ENCODE measurements at regions of chr6 and their contacts with region 1.

Region 1: GRCh38 chr6:113994918-113995342 is 24.0 kb upstream of the HDAC2 start:
- DNase-seq: peak; percentile 87
- ATAC-seq: peak; percentile 99
- H3K4me3 ChIP-seq: no peak overlapping the region
- H3K27ac ChIP-seq: no peak overlapping the region
- H3K4me1 ChIP-seq: peaks cover 13% of the 10 kb centered on the region
- H3K27me3 ChIP-seq: no peaks in the 10 kb centered on the region
- CTCF ChIP-seq: peak; percentile 92
- EP300 ChIP-seq: 0 out of 4 replicates have a peak, but pooled peaks of 1 of the 2 experiments have one; percentile 16
- POLR2A ChIP-seq: no peak
- RAD21 ChIP-seq: peak; percentile 91

Region 2: DNA sequence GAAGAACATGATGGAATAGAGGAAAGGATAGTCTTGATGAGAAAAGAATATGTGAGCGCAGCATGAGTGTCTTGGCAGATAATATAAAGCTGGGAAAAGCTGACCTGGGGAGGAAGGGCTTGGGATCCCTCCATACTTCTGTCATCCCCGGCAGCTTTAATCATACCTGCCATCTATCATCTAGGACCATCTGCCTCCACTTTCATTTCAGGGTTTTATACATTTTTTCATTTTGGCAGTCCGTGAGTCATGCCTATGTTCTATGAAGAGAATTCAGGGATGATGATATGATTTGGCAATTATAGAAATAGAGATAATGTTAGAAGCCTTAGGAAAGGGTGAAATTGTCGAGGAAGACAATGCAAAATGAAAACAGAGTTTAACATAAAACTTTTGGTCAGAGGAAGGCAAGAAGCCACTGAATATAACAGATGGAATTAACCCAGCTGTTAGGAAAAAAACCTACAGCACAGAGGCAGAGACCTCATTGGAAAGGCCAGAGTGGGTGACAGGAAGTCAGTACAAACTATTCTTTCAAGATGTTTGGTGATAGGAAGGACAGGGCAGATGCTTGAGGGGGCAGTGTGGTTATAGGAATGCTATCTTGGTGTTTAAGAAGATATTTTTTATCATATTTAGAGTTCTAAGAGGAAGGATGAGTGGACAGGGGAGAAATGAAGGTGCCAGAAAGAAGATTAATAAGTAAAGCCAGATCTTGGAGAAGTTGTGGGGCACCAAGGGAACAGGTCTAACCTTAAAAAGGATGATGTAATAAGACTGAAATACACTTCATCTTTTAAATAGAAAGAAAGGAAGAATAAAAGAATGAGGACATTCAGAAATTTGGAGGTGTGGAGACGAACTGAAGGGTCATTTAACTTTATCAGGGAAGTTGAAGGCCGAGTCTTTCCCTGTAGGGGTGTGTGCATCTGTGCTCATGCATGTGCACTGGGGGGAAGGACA is 99.9 kb before region 1 on chr6:
- CTCF ChIA-PET with region 1: no interaction called
- POLR2A ChIA-PET with region 1: no interaction called
- in situ Hi-C with region 1: no loop called
- intact Hi-C with region 1: no loop called
- DNase-seq: no peak
- ATAC-seq: no peak
- H3K4me3 ChIP-seq: no peak overlapping the region
- H3K27ac ChIP-seq: no peak overlapping the region
- H3K4me1 ChIP-seq: no peaks in the 10 kb centered on the region
- H3K27me3 ChIP-seq: no peaks in the 10 kb centered on the region
- CTCF ChIP-seq: no peak
- EP300 ChIP-seq: no peak
- POLR2A ChIP-seq: no peak
- RAD21 ChIP-seq: no peak

Region 3: GRCh38 chr6:114304304-114304887 is 309.5 kb after region 1 on chr6:
- CTCF ChIA-PET with region 1: interaction called, 7 read pairs
- POLR2A ChIA-PET with region 1: interaction called, 3 read pairs
- in situ Hi-C with region 1: no loop called
- intact Hi-C with region 1: loop called (anchors 2 kb)
- DNase-seq: peak; percentile 19
- ATAC-seq: no peak
- H3K4me3 ChIP-seq: no peak overlapping the region
- H3K27ac ChIP-seq: no peak overlapping the region
- H3K4me1 ChIP-seq: peaks cover 36% of the 10 kb centered on the region
- H3K27me3 ChIP-seq: no peaks in the 10 kb centered on the region
- CTCF ChIP-seq: peak; percentile 34; the same call in 1 of the 2 replicates
- EP300 ChIP-seq: no peak
- POLR2A ChIP-seq: no peak
- RAD21 ChIP-seq: no peak

Region 4: GRCh38 chr6:114514153-114514552 is 519.2 kb after region 1 on chr6:
- CTCF ChIA-PET with region 1: no interaction called
- POLR2A ChIA-PET with region 1: no interaction called
- in situ Hi-C with region 1: no loop called
- intact Hi-C with region 1: loop called (anchors 1 kb)
- DNase-seq: peak; percentile 15
- ATAC-seq: peak; percentile 60; the same call in 2 of the 3 replicates
- H3K4me3 ChIP-seq: no peak overlapping the region
- H3K27ac ChIP-seq: no peak overlapping the region
- H3K4me1 ChIP-seq: peaks cover 13% of the 10 kb centered on the region
- H3K27me3 ChIP-seq: no peaks in the 10 kb centered on the region
- CTCF ChIP-seq: no peak
- EP300 ChIP-seq: peak in 1 of 2 experiments; percentile 8; a peak in 1 of 4 replicates
- POLR2A ChIP-seq: no peak
- RAD21 ChIP-seq: no peak

Region 5: DNA sequence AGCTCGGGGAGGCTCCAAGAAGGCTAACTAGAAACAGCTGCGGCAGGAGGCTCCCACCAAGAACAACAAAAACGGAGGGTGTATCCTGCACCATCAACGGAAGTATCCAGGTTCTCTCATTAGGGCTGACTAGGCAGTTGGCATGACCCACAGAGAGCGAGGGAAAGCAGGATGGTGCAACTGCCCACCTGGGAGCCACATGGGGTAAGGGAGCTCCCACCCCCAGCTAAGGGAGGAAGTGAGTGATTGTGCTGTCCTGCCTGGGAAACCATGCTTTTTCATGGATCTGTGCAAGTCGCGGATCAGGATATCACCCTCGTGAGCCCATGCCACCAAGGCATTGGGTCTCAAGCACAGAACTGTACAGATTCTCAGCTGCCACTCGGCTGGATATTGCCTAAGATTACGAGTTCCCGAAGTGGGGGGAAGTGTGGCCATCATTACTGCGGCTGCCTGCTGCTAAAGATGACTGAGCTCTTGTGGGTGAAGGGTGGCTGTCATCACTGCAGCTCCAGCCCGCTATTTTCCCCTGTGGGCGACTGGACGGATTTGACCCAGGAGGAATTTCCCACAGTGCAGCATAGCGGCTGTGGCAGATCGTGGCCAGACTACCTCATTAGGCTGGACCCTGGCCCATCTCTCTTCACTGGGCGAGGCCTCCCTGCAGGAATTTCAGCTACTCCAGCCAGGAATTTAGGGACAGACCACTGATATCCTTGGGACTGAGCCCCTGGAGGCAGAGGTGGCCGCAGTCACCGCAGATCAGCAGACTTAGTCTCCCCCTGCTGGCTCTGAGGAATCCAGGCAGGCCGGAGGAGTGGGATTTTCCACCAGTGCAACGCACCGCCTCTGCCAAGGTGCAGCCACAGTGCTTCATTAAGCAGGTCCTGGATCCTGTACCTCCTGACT is 1550.1 kb after region 1 on chr6:
- CTCF ChIA-PET with region 1: interaction called, 6 read pairs
- POLR2A ChIA-PET with region 1: no interaction called
- in situ Hi-C with region 1: no loop called
- intact Hi-C with region 1: loop called (anchors 5 kb)
- DNase-seq: peak; percentile 22
- ATAC-seq: peak; percentile 100
- H3K4me3 ChIP-seq: peak overlapping the region in 1 of 3 experiments; percentile 49; a peak in 2 of 6 replicates
- H3K27ac ChIP-seq: no peak overlapping the region
- H3K4me1 ChIP-seq: no peaks in the 10 kb centered on the region
- H3K27me3 ChIP-seq: no peaks in the 10 kb centered on the region; a peak in 1 of 5 replicates
- CTCF ChIP-seq: peak; percentile 88
- EP300 ChIP-seq: peak in 1 of 2 experiments; percentile 33; a peak in 1 of 4 replicates
- POLR2A ChIP-seq: no peak
- RAD21 ChIP-seq: peak; percentile 51

Measured in HepG2 (cell line).